WTC11 (cell line): ENCODE measurements at regions of chr6 and their contacts with region 1.

Region 1: DNA sequence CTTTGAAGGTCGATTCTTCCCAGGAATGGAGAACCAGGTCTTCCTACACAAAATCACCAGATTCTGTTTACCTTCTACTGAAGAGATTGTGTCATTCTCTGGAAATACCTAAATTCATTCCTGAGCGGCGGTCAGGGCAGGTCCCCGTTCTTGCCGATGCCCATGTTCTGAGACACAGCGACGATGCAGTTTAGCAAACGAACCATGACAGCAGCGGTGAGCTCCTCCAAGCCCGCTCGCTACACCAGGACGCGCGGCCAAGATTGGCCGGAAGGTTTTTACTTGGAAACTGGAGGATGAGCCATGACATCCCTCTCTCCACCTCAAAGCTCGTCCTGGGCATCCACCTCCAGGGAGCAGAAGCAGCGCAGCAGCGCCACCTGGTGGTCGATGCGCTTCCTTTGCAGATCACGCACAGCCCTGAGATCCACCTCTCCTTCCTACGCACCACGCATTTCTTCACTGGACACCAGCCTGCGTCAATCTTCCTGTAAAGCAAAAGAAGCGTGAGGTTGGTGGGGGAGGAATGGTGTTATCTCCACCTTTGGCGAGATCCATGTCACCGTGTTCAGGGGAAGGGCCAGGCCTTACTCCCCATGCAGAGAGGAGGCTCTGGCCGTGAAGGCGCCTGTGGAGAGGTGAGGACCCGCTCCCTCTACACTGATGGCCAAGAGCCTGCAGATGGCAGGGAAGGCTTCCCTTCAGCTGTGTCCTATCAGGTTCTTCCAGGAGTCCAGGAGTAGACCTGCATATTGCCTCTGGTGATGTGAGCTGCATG is 9.9 kb upstream of the HLA-B start:
- DNase-seq: peak; percentile 91
- ATAC-seq: peak; percentile 96
- H3K4me3 Mint-ChIP-seq: peak overlapping the region; percentile 63
- H3K27ac Mint-ChIP-seq: no peak overlapping the region
- H3K4me1 Mint-ChIP-seq: peaks cover 4% of the 10 kb centered on the region; the same call in 1 of the 2 replicates
- H3K27me3 Mint-ChIP-seq: peaks cover 72% of the 10 kb centered on the region
- CTCF ChIP-seq: peak; percentile 88

Region 2: DNA sequence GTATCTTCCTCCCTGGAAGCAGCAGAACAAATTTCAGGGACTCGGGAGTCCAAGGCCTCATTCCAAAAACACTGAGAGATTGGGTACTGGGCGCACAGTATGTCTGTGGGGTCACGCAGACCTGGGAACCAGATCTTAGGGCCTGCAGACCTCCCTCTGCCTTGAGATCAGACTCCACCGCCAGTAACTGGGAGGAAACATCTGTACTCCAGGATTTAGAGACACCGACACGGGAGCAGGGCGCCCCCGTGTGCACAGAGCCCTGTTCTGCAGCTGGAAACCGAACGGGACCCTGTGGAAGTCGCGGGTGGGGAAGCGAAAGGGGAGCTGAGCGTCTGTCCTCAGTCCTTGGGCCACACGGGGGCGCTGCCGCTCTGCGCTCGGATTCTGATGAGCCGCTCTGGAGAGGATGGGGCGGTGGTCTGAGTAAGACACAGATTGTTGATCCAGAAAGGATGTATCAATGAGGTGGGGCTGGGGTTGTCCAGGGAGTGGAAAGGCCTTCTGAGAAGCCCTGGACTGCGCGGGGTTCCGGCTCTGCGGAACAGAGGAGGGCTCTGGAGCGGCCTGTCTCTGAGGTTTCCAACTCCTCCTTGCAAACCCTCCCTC is 913.3 kb before region 1 on chr6:
- CTCF ChIA-PET with region 1: no interaction called
- POLR2A ChIA-PET with region 1: no interaction called
- DNase-seq: peak; percentile 96
- ATAC-seq: peak; percentile 95
- H3K4me3 Mint-ChIP-seq: no peak overlapping the region
- H3K27ac Mint-ChIP-seq: no peak overlapping the region
- H3K4me1 Mint-ChIP-seq: peaks cover 5% of the 10 kb centered on the region; the same call in 1 of the 2 replicates
- H3K27me3 Mint-ChIP-seq: peaks cover 89% of the 10 kb centered on the region
- CTCF ChIP-seq: peak; percentile 88

Region 3: DNA sequence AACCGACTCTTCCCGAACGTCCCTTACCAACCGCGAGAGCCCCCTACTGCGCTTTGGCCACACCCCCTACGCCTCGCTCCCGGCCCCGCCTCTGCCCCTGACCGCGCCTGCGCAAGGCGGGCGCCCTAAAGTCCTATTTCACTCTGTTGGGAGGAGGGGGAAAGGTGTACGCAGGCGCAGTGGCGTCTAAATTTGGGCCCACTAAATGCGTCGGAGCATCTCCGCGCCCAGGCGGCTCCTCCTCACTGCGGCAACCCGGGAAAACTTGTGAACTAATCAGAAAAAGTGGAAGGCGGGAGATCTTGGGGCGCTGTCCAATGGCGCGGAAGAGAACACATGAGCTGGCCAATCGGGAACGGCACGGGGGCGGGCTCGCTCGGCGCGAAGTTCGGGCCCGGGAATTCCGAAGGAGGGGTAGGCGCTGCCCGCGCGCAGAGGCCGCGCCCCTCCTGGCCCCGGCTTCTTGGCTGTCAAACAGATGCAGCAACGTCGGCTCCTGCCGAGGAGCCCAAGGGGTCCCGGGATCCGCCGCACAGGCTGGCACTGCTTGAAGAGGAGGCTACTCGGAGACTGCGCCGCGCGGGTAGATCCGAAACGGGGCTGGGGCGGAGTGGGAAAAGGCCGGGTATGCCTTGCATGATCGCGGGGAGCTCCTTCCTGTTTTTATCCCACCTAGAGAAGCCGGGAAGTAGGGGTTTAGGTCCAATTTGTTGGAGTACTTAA is 208.6 kb before region 1 on chr6 and contains the start of gene TCF19:
- CTCF ChIA-PET with region 1: interaction called, 11 read pairs
- POLR2A ChIA-PET with region 1: no interaction called
- DNase-seq: peak; percentile 99
- ATAC-seq: peak; percentile 76
- H3K4me3 Mint-ChIP-seq: peak within 1 kb of the TSS; percentile 96
- H3K27ac Mint-ChIP-seq: peak within 1 kb of the TSS; percentile 93
- H3K4me1 Mint-ChIP-seq: peaks cover 40% of the 10 kb centered on the region
- H3K27me3 Mint-ChIP-seq: no peaks in the 10 kb centered on the region
- CTCF ChIP-seq: no peak
- total RNA-seq, gene TCF19: 10.2 to 12.7 TPM (median 10.7 TPM) in 3 replicates

Region 4: DNA sequence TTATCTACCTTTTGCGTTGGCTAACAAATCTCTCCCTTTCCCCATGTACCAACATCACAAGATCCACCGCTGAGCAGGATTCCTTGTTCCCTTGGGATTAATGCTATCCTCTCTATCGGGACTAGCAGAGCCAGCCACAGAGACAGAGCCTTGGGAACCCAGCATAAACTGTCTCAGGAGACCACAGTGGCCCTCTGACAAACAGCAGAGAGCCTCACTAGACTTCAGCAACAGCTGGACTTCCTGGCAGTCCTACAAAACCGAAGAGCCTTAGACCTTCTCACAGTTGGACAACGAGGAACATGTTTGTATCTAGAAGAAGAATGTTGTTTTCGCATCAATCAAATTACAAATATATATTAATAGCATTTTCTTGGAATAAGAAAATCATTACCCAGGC is 156.8 kb before region 1 on chr6:
- CTCF ChIA-PET with region 1: interaction called, 29 read pairs
- POLR2A ChIA-PET with region 1: no interaction called
- DNase-seq: no peak
- ATAC-seq: no peak
- H3K4me3 Mint-ChIP-seq: no peak overlapping the region
- H3K27ac Mint-ChIP-seq: peak overlapping the region; percentile 16; the same call in 1 of the 2 replicates
- H3K4me1 Mint-ChIP-seq: peaks cover 23% of the 10 kb centered on the region
- H3K27me3 Mint-ChIP-seq: no peaks in the 10 kb centered on the region
- CTCF ChIP-seq: no peak

Region 5: DNA sequence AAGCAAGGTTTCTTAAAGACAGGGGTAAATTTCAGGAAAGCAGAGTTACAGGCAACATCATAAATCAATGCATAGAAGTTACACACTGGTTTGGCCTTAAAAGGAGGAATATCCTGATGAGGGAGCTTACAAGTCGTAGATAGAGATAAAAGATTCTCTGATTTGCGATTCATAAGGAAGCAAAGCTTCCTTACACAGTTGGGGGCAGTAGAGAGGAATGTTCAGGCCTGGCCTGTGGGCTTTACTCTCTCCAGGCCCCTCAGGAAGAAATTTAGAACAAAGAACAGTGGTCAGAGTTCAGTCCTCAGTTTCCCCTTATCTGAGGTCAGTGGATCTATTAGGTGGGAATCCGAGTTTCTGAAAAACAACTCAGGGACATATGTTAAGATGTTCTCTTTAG is 114.3 kb before region 1 on chr6:
- CTCF ChIA-PET with region 1: interaction called, 19 read pairs
- POLR2A ChIA-PET with region 1: no interaction called
- DNase-seq: no peak
- ATAC-seq: peak; percentile 46; the same call in 1 of the 2 replicates
- H3K4me3 Mint-ChIP-seq: no peak overlapping the region
- H3K27ac Mint-ChIP-seq: no peak overlapping the region
- H3K4me1 Mint-ChIP-seq: 0 out of 2 replicates have a peak, but pooled peaks cover 2% of the 10 kb centered on the region
- H3K27me3 Mint-ChIP-seq: peaks cover 24% of the 10 kb centered on the region
- CTCF ChIP-seq: no peak

Region 6: GRCh38 chr6:31321820-31322219 is 45.1 kb before region 1 on chr6:
- CTCF ChIA-PET with region 1: interaction called, 10 read pairs
- POLR2A ChIA-PET with region 1: no interaction called
- DNase-seq: peak; percentile 40
- ATAC-seq: peak; percentile 90
- H3K4me3 Mint-ChIP-seq: no peak overlapping the region
- H3K27ac Mint-ChIP-seq: no peak overlapping the region
- H3K4me1 Mint-ChIP-seq: no peaks in the 10 kb centered on the region
- H3K27me3 Mint-ChIP-seq: peaks cover 6% of the 10 kb centered on the region; the same call in 1 of the 2 replicates
- CTCF ChIP-seq: no peak

Region 7: GRCh38 chr6:31441365-31442267 is 74.7 kb after region 1 on chr6:
- CTCF ChIA-PET with region 1: interaction called, 26 read pairs
- POLR2A ChIA-PET with region 1: no interaction called
- DNase-seq: peak; percentile 91
- ATAC-seq: peak; percentile 87
- H3K4me3 Mint-ChIP-seq: no peak overlapping the region
- H3K27ac Mint-ChIP-seq: no peak overlapping the region
- H3K4me1 Mint-ChIP-seq: peaks cover 13% of the 10 kb centered on the region
- H3K27me3 Mint-ChIP-seq: peaks cover 39% of the 10 kb centered on the region
- CTCF ChIP-seq: peak; percentile 71